Heart left ventricle (tissue), 16 donors: ENCODE measurements at regions of chr1 and their contacts with region 1.

Region 1: GRCh38 chr1:117067533-117068370 is 7.6 kb downstream of the TTF2 start:
- DNase-seq: peak; percentile 43 to 64 (median 47)
- ATAC-seq: peak; percentile 58 to 92 (median 90)
- H3K4me3 ChIP-seq: no peak overlapping the region
- H3K27ac ChIP-seq: no peak overlapping the region
- H3K4me1 ChIP-seq: no peaks in the 10 kb centered on the region
- H3K27me3 ChIP-seq: no peaks in the 10 kb centered on the region
- CTCF ChIP-seq: peak; percentile 65 to 88 (median 79)
- POLR2A ChIP-seq: no peak

Region 2: GRCh38 chr1:116971258-116971860 is 96.4 kb before region 1 on chr1:
- intact Hi-C with region 1: no loop called
- DNase-seq: no peak
- ATAC-seq: peak in 3 of 4 donors; percentile 51 to 68 (median 67)
- H3K4me3 ChIP-seq: no peak overlapping the region
- H3K27ac ChIP-seq: peak overlapping the region in 7 of 12 donors; percentile 8 to 65 (median 41)
- H3K4me1 ChIP-seq: peaks cover 0 to 25% (median 15%) of the 10 kb centered on the region in 12 donors
- H3K27me3 ChIP-seq: no peaks in the 10 kb centered on the region
- CTCF ChIP-seq: no peak
- POLR2A ChIP-seq: no peak

Region 3: DNA sequence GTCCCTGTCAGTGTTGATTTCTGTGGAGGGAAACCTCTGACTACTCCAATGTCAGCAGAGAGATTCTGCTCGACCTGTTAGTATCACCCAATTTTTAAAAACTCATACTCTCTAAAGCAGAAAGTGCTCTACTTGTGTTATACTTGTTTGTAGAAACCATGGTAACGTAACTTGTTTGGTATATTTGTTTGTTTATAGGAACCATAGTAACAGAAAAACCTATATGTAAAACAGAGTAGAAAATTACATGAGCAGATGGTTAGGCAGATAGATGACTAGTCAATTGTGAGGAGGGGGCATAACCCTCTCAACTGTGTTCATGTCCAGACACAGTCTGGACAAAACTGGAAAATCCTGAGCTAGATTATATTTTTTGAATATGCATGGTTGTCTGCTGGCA is 47.1 kb after region 1 on chr1:
- intact Hi-C with region 1: loop called in 4 of 10 experiments (anchors 2 to 10 kb)
- DNase-seq: no peak
- ATAC-seq: no peak
- H3K4me3 ChIP-seq: no peak overlapping the region
- H3K27ac ChIP-seq: no peak overlapping the region
- H3K4me1 ChIP-seq: peaks cover 0 to 25% (median 5%) of the 10 kb centered on the region in 12 donors
- H3K27me3 ChIP-seq: no peaks in the 10 kb centered on the region
- CTCF ChIP-seq: no peak
- POLR2A ChIP-seq: no peak

Region 4: DNA sequence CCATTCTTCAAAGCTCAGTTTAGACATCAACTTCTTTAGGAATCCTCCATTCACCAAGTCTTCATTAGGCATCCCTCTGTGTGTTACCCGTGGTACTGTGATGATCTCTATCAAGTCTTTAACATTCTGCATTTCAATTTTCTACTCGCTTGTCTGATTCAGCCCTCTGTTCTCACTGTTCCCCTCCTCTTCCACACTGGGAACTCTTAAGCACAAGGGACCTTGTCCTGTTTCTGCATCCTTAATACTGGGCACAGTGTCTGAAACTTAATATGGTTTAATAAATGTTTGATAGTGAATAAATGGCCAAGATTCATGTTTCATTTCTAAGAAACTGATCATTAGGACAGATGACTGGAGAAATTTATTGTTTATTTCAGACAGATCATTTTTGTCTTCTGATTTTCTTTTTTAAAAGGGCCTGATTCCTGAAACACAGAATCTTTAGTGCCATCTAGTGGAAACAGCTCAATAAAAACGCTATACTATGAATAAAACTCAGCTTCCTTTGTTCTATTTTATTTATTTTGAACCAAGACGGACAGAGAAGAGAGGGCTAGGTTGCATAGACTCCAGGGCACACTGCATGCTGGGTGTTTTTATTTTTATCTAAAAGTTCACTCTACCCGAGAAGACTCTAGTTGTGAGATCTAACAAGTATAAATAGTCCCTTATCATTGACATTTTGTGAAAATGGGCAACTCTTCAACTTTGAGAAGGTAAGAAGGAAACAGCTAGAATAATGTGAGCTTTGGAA is 60.7 kb after region 1 on chr1:
- intact Hi-C with region 1: loop called in 8 of 10 experiments (anchors 2 to 10 kb)
- DNase-seq: no peak
- ATAC-seq: peak; percentile 66 to 87 (median 82)
- H3K4me3 ChIP-seq: peak overlapping the region in 7 of 12 donors; percentile 1 to 30 (median 15)
- H3K27ac ChIP-seq: peak overlapping the region in 11 of 12 donors; percentile 0 to 78 (median 61)
- H3K4me1 ChIP-seq: peaks cover 0 to 24% (median 6%) of the 10 kb centered on the region in 12 donors
- H3K27me3 ChIP-seq: no peaks in the 10 kb centered on the region
- CTCF ChIP-seq: peak; percentile 26 to 66 (median 54)
- POLR2A ChIP-seq: no peak

Region 5: DNA sequence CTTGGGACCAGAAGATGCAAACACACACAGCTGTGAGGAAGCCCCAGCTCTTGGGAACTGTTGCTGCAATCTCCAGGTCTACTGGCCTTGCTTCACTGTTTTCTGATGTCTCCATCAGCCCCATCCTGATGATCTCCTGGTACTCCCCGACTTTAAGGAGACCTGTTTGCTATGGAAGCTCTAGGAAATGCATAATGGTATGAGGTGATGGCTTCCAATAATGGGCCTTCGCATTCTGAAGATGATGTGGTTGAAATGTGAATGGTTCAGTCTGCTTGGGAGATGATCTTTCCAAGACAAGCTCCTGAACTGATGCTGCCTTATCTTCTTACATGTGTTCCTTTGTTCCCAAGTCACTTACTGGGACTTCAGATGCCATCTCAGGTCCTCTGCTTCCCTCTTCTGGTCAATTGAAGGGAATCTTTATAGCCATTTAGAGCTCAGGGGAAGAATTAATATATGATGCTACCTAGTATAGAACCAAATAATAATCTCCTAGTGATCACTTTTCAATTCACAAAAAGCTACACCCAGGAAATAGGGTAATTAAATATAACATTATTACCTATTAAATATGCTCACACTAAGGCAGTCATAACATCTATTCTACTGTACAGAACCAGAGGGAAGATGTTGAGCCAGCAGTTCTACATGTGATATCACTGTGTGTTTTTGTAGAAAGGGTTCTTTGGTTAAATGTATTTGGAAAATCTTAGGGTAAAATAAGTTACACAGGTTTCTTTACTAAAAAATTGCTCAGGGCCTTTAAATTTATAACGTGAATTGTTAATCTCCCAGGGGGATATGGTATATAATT is 216.9 kb after region 1 on chr1:
- intact Hi-C with region 1: loop called in 9 of 10 experiments (anchors 1 to 5 kb)
- DNase-seq: no peak
- ATAC-seq: peak; percentile 55 to 80 (median 72)
- H3K4me3 ChIP-seq: no peak overlapping the region
- H3K27ac ChIP-seq: no peak overlapping the region
- H3K4me1 ChIP-seq: no peaks in the 10 kb centered on the region
- H3K27me3 ChIP-seq: no peaks in the 10 kb centered on the region
- CTCF ChIP-seq: peak; percentile 16 to 66 (median 54)
- POLR2A ChIP-seq: no peak